ENCODE measurements at regions of chr5 and their contacts with region 1.

Region 1: DNA sequence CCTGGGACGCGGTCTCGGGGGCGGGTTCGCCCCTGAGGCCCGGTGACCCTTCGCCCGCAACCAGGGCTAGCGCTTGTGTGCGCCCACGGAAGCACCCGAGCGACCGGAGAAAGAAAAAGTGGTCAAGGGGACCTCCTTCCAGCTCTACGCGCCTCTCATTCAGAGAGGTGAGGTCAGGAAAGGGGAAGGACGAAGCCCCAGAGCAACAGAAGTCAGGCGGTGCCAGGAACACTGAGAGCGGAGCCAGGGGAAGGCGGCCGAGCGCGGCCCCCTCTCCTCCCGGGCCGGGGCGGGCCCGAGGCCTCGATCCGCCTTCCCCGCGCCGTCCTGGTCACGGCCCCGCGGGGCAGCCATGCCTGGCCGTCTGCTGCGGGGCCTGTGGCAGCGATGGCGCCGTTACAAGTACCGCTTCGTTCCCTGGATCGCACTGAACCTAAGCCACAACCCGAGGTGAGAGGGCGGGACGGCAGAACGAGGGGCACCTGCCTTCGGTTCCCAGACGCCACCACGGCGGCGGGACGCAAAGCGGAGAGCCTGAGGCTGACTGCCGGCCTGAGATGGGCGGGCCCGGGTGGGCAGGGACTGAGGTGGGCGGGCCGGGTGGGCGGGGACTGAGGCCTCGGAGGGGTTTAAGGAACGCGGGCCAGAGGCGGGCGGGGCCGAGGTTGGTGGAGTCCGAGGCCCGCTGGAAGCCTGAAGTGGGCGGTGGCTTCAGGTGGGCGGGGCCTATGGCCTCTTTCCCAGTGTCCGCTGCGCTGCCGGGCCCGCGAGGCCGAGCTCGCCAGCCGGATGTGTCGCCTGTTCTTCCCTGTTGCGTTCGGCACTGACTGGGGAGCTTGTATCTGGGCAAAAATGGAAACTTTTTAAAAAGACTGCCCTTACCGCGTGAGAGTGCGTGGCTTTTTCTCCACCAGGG is at the start of gene SETD9:
- ATAC-seq: peak; percentile 82 to 95 (median 90)
- H3K4me3 ChIP-seq: peak within 1 kb of the TSS; percentile 46 to 69 (median 52)
- H3K27ac ChIP-seq: peak within 1 kb of the TSS; percentile 84 to 90
- H3K4me1 ChIP-seq: peaks cover 3 to 7% of the 10 kb centered on the region in 2 donors
- total RNA-seq, gene SETD9: 6.7 to 23.8 (median 11.2) TPM

Region 2: DNA sequence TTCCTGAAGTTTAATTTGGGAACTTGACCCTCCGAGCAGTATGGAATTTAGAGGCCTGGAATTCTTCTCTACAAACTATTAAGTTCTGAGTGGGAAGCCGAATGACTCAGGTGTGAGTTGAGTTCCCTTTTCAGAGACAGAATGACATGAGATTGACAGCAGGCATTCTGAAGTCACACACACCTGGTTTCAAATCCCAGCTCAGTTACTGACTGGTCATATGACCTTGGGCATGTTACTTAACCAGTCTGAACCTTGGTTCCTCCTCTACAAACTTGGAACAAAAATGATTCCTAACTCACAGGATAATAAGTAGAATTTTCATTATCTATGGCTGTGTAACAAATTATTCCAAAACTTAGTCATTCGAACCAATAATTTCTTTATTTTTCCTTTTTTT is 218.8 kb after region 1 on chr5:
- in situ Hi-C with region 1: loop called in 1 of 9 experiments (anchors 25 kb)
- ATAC-seq: no peak
- H3K4me3 ChIP-seq: no peak overlapping the region
- H3K27ac ChIP-seq: no peak overlapping the region
- H3K4me1 ChIP-seq: no peaks in the 10 kb centered on the region

Region 3: DNA sequence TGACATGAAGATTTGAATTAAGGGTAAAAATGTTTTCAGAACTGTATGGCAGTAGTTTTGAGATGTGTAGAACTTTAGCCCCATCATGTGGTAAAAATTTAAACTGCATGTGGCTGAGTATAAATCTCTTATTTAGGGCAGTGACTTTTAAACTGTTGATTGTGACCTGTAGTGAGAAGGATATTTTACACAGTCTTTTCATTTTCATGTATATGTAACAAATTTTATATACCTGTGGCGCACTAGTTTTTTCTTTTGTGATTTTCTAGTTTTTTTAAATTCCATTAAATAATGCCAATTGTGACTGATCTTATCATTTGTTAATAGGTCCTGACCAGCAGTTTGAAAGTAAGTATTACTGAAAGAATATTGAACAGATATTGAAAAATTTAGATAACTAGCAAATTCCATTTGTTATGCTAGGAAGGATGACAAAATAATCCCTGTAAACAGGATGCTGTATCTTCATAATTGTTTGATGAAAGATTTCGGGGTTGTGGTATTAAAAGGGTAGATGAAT is 311.6 kb after region 1 on chr5:
- in situ Hi-C with region 1: loop called in 3 of 9 experiments (anchors 25 kb)
- ATAC-seq: peak in 4 of 8 experiments; percentile 39 to 76 (median 66)
- H3K4me3 ChIP-seq: no peak overlapping the region
- H3K27ac ChIP-seq: no peak overlapping the region
- H3K4me1 ChIP-seq: no peaks in the 10 kb centered on the region